ENCODE measurements at regions of chr22 and their contacts with region 1.

Region 1: GRCh38 chr22:49960159-49961004 is at the start of gene PIM3:
- DNase-seq: peak; percentile 94
- ATAC-seq: peak; percentile 67
- H3K4me3 ChIP-seq: peak within 1 kb of the TSS; percentile 97 to 99 (median 97)
- H3K27ac ChIP-seq: peak within 1 kb of the TSS; percentile 87
- H3K4me1 ChIP-seq: peaks cover 75% of the 10 kb centered on the region
- H3K27me3 ChIP-seq: no peaks in the 10 kb centered on the region; a peak in 1 of 5 replicates
- CTCF ChIP-seq: 0 out of 2 replicates have a peak, but pooled peaks have one; percentile 14
- EP300 ChIP-seq: no peak
- POLR2A ChIP-seq: peak in 1 of 2 experiments; percentile 88; a peak in 2 of 4 replicates
- RAD21 ChIP-seq: peak; percentile 60; the same call in 1 of the 2 replicates
- total RNA-seq, gene PIM3: 18.2 and 31.2 TPM in 2 replicates

Region 2: DNA sequence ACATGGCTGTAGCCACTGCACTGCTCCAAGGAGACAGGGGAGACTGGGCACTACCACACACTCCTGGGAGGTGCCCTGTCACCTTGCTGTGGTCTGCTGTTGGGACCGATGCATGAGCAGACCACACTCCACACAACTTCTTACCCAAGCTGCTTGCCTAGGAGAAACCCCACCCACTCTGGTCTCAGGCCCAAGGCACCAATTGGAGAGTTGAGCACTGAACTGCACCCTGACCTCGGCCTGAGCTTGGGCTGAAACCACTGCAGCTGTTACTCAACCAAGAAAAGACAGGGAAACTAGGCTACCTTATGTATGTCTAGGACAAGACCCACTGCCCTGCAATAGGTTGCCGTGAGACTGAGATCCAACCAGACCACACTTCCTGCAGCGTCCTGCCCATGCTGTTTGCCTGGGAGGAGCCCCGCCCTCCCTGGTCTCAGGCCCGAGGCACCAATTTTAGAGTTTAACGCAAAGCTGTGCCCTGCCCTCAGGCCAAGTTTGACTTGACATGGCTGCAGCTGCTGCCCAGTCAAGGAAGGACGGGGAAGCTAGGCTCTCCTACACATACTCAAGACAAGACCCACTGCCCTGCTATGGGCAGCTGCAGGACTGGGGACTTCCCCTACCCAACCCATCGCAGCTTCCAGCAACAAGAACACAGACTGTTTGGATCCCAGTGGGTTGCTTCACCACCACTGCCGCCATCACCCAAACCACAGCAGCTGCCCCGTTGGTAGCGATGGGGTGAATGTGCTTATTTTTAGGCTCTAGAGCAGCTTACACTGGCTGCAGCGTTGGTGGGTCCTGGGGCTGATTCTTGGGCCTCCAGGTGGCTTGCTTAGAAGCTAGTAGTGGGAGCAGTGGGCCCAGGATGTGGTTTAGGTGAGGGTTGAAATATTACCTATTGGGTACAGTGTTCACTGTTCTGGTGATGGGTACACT is 199.5 kb before region 1 on chr22:
- CTCF ChIA-PET with region 1: no interaction called
- POLR2A ChIA-PET with region 1: no interaction called
- in situ Hi-C with region 1: no loop called
- intact Hi-C with region 1: no loop called
- DNase-seq: no peak
- ATAC-seq: peak; percentile 53
- H3K4me3 ChIP-seq: peak overlapping the region in 1 of 3 experiments; percentile 27; a peak in 1 of 6 replicates
- H3K27ac ChIP-seq: no peak overlapping the region
- H3K4me1 ChIP-seq: peaks cover 18% of the 10 kb centered on the region
- H3K27me3 ChIP-seq: peaks cover 4 to 19% of the 10 kb centered on the region in 2 experiments; a peak in 3 of 5 replicates
- CTCF ChIP-seq: no peak
- EP300 ChIP-seq: no peak
- POLR2A ChIP-seq: no peak
- RAD21 ChIP-seq: no peak

Region 3: GRCh38 chr22:49970528-49971231 is 10.3 kb after region 1 on chr22:
- CTCF ChIA-PET with region 1: no interaction called
- POLR2A ChIA-PET with region 1: interaction called, 722 read pairs
- in situ Hi-C with region 1: no loop called
- intact Hi-C with region 1: no loop called
- DNase-seq: peak; percentile 97
- ATAC-seq: peak; percentile 54
- H3K4me3 ChIP-seq: peak overlapping the region; percentile 55 to 71 (median 58); a peak in 5 of 6 replicates
- H3K27ac ChIP-seq: peak overlapping the region; percentile 57
- H3K4me1 ChIP-seq: peaks cover 76% of the 10 kb centered on the region
- H3K27me3 ChIP-seq: no peaks in the 10 kb centered on the region
- CTCF ChIP-seq: peak; percentile 47
- EP300 ChIP-seq: peak; percentile 42 to 87; a peak in 3 of 4 replicates
- POLR2A ChIP-seq: peak in 1 of 2 experiments; percentile 59; a peak in 2 of 4 replicates
- RAD21 ChIP-seq: peak; percentile 9